A673 (cell line): ENCODE measurements at regions of chr11 and their contacts with region 1.

Region 1: DNA sequence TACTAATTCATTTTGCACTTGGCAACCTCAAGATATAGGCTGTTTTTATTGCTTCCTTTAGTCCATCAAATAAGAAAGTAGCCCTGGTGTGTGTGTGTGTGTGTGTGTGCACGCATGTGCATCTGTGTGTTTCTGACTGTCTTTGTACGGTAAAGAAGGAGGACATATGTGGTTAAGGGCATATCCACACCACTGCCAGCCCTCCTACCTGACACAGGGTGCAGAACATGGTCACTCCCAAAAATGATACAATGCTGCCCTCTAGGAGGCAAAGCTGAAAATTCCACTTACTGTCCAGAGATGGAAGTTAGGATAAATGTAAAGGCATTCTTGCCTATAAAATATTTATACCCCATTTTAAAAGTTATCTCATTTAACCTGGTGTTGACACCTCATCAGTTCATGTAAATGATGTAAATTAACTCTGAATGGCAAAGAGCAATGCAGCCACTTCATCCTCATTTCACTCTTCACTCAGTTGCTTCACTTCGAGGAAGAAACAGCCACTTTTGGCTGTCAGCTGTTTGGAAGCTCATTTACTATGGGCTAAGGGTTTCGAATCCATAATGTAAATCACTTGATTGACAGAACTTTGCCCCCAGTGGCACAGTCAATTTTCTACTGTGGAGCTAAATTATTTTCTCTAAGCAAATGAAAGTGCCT is 83.1 kb upstream of the MTNR1B start:
- DNase-seq: peak; percentile 84
- H3K4me3 ChIP-seq: no peak overlapping the region
- H3K27ac ChIP-seq: no peak overlapping the region
- H3K4me1 ChIP-seq: peaks cover 6% of the 10 kb centered on the region
- H3K27me3 ChIP-seq: no peaks in the 10 kb centered on the region
- CTCF ChIP-seq: peak; percentile 89

Region 2: DNA sequence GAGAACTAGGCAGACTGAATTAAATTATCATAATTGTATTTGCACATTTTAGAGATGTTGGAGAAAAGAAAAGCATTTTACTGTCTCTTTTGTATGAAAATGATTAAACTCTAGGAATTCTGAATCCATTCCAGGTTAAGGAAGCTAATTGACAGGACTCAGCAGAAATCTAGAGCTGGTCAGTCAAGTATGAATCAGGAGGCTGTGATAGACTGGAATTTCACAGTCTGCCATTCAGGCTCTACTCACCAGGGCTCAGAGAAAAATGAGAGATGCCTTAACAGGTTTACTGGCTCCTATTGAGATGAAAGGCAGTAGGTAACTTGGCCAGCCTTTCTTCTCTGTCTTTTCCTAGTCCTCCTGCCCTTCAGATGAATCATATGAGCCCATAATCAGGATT is 1969.7 kb before region 1 on chr11:
- CTCF ChIA-PET with region 1: no interaction called
- POLR2A ChIA-PET with region 1: no interaction called
- intact Hi-C with region 1: loop called (anchors 10 kb)
- DNase-seq: no peak
- H3K4me3 ChIP-seq: no peak overlapping the region
- H3K27ac ChIP-seq: no peak overlapping the region
- H3K4me1 ChIP-seq: peaks cover 20% of the 10 kb centered on the region
- H3K27me3 ChIP-seq: no peaks in the 10 kb centered on the region
- CTCF ChIP-seq: no peak

Region 3: DNA sequence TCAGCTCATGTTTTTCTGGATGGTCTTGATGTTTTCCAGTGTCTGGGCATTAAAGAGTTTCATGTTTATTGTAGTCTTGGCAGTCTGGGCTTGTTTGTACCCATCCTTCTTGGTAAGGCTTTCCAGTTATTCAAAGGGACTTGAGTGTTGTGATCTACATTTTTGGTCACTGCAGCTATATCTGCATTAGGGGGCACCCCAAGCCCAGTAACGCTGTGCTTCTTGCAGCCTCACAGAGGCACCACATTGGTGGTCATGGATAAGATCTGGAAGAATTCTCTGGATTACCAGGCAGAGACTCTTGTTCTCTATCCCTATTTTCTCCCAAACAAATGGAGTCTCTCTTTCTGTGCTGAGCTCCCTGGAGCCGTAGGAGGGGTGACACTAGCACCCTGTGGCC is 1113.3 kb before region 1 on chr11:
- CTCF ChIA-PET with region 1: interaction called, 3 read pairs
- POLR2A ChIA-PET with region 1: no interaction called
- intact Hi-C with region 1: loop called (anchors 2 kb)
- DNase-seq: peak; percentile 86
- H3K4me3 ChIP-seq: no peak overlapping the region
- H3K27ac ChIP-seq: no peak overlapping the region
- H3K4me1 ChIP-seq: peaks cover 9% of the 10 kb centered on the region
- H3K27me3 ChIP-seq: no peaks in the 10 kb centered on the region
- CTCF ChIP-seq: peak; percentile 81

Region 4: DNA sequence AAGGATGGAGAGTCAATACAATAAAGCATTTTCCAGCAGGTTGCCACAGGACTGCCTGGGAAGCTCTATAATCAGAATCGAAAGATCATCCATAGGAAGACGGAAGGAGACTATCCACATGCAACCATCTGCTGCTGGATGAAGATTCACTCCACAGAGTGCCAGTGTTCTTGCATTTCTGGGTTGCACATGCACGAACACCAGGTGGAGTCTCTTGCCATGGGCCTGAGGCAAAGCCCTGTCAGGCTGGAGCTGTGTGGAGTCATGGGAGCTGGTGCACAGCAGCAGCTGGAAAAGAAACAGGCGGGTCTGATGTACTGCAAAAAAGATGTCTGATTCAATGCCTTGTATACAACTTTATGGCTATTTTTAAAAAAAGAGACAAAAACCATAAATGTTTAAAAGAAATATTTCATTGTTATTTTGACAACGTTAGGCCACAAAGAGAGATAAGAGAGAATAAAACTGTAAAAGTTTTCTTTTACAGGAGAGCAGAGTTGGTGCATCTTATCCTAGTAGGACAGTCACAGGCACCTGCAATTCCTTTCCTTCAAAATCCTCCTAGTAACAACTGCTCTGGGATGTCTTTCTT is 674.7 kb before region 1 on chr11:
- CTCF ChIA-PET with region 1: no interaction called
- POLR2A ChIA-PET with region 1: no interaction called
- intact Hi-C with region 1: loop called (anchors 5 kb)
- DNase-seq: peak; percentile 46
- H3K4me3 ChIP-seq: no peak overlapping the region
- H3K27ac ChIP-seq: no peak overlapping the region
- H3K4me1 ChIP-seq: no peaks in the 10 kb centered on the region
- H3K27me3 ChIP-seq: no peaks in the 10 kb centered on the region
- CTCF ChIP-seq: peak; percentile 47

Region 5: GRCh38 chr11:92552942-92553341 is 333.4 kb before region 1 on chr11:
- CTCF ChIA-PET with region 1: interaction called, 7 read pairs
- POLR2A ChIA-PET with region 1: no interaction called
- intact Hi-C with region 1: loop called (anchors 1 kb)
- DNase-seq: peak; percentile 46
- H3K4me3 ChIP-seq: no peak overlapping the region
- H3K27ac ChIP-seq: no peak overlapping the region
- H3K4me1 ChIP-seq: peaks cover 7% of the 10 kb centered on the region
- H3K27me3 ChIP-seq: no peaks in the 10 kb centered on the region
- CTCF ChIP-seq: peak; percentile 55

Region 6: DNA sequence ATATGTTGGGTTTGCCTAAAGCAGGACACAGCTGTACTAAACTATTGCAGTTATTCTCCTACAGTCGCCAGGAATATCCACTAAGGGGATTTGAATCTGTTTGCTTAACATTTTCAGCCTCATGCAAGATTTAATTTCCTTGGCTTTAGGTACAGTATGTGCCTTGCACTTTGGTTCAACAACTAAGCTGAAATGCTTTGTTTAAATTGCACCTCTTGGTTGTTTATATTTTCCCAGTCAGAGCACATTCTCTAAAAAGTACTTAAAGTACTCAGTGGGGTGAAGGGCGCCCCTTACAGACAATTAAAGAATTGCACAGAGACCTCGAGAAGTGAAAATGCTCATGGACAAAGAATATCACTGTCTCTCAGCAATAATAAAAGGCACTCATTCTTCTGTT is 24.7 kb before region 1 on chr11:
- CTCF ChIA-PET with region 1: no interaction called
- POLR2A ChIA-PET with region 1: no interaction called
- intact Hi-C with region 1: no loop called
- DNase-seq: no peak
- H3K4me3 ChIP-seq: no peak overlapping the region
- H3K27ac ChIP-seq: no peak overlapping the region
- H3K4me1 ChIP-seq: no peaks in the 10 kb centered on the region
- H3K27me3 ChIP-seq: no peaks in the 10 kb centered on the region
- CTCF ChIP-seq: peak; percentile 56

Region 7: DNA sequence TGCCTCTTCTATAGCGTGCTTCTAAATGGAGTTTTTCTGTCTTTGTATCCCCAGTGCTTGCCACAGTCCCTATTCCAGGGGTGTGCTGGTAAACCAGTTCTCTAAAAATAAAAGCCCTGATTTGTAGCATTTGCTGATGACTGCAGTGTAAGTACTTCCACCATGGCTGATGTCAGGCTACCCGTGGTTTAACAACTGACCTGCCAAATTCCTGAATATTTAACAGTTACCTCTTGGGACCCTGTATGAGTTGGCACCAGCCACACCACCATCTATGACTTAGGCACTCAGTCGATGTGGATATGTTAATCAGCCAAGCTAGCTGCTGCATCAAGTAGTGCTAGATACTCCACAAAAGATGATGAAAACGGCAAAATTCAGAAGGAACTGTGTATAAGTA is 10.9 kb before region 1 on chr11:
- CTCF ChIA-PET with region 1: no interaction called
- POLR2A ChIA-PET with region 1: no interaction called
- intact Hi-C with region 1: no loop called
- DNase-seq: no peak
- H3K4me3 ChIP-seq: no peak overlapping the region
- H3K27ac ChIP-seq: no peak overlapping the region
- H3K4me1 ChIP-seq: no peaks in the 10 kb centered on the region
- H3K27me3 ChIP-seq: no peaks in the 10 kb centered on the region
- CTCF ChIP-seq: no peak